ENCODE measurements at regions of chr22 and their contacts with region 1.

Region 1: DNA sequence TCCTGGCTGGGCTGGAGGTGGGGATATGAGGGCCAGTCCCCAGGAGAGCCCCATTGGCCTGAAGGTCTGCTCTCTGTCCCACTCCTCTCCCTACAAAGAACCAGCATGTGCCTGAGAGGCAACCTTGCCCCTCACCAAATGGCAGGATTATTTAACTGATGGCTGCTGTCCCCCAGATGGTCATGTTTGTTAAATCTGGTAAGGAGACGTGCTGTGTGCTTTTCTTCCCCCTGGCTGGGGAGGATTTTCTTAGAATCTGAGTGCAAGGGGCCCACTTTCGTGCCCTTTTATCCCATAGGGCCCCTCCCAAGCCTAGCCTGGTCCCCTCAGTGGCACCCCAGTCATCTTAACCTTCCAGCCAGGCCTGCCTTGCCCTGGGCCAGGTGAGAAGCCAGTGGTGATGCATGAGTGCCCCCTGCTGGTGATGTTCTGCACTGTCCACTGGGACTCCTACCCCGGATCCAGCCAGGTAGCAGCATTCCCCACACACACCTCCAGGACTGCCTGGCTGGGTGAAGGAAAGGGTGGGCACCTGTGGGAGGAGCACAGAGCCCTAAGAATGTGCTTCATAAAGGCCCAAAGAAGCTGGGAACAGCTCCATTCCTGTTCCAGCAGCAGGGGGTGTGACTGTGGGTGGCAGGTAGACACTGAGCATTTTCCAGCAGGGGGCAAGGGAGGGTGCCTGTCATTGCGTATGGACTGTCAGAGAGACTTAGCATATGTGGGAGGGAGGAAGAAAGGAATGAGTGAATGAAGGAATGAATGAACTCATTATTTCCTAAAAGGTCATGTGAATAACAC is 28.9 kb downstream of the MFNG start:
- H3K4me3 ChIP-seq: no peak overlapping the region
- H3K27ac ChIP-seq: no peak overlapping the region
- H3K4me1 ChIP-seq: 0 out of 2 replicates have a peak, but pooled peaks cover 4% of the 10 kb centered on the region
- CTCF ChIP-seq: peak; percentile 97

Region 2: GRCh38 chr22:37267135-37267587 is 190.1 kb before region 1 on chr22:
- CTCF ChIA-PET with region 1: interaction called, 13 read pairs
- POLR2A ChIA-PET with region 1: no interaction called
- H3K4me3 ChIP-seq: peak overlapping the region; percentile 12; the same call in 1 of the 2 replicates
- H3K27ac ChIP-seq: no peak overlapping the region
- H3K4me1 ChIP-seq: no peaks in the 10 kb centered on the region
- CTCF ChIP-seq: no peak

Region 3: DNA sequence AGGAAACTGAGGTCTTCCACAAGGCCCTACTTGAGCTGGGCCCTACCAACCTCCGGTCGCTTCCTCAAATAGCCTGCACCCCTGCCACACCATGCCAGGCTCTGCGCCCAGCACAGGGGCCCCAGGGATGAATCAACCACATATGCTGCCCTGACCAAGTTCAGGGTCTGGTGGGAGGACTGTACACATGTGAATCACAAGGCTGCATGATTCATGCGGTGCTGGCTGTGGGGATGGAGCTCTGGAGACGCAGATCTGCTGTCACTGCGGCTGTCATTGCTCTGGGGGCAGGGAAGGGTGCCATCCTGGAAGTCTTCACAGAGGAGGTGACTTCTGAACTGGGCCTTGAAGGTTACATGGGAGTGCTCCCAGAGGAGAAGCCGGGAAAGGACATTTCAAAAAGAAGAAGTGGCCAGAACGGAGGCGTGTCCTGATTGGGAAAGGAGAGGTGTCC is 153.4 kb before region 1 on chr22:
- CTCF ChIA-PET with region 1: interaction called, 10 read pairs
- POLR2A ChIA-PET with region 1: no interaction called
- H3K4me3 ChIP-seq: no peak overlapping the region
- H3K27ac ChIP-seq: no peak overlapping the region
- H3K4me1 ChIP-seq: 0 out of 2 replicates have a peak, but pooled peaks cover 4% of the 10 kb centered on the region
- CTCF ChIP-seq: no peak

Region 4: DNA sequence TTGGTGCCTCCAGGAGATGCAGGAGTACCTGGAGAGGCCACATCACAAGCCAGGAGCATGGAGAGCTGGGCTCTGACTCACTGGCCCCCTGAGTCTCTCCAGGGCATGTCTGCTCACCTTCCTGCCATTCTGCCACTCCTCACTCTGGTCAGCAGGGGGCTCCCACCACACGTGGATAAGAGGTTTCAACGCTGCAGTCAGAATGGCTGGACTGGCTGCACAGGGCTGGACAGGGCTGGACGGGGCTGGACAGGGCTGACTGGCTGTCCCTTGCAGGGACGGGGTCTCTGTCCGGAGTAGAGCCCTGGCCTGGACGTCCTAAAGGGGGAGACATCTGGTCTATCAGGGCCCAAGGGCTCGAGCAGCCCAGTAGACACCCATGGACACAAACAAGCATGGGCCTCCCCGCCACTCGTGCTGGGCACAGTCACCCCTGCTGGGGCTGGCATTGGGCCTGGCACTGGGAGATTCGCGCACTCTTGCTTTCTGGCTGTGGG is 140.4 kb before region 1 on chr22:
- CTCF ChIA-PET with region 1: interaction called, 273 read pairs
- POLR2A ChIA-PET with region 1: interaction called, 4 read pairs
- H3K4me3 ChIP-seq: no peak overlapping the region
- H3K27ac ChIP-seq: no peak overlapping the region
- H3K4me1 ChIP-seq: no peaks in the 10 kb centered on the region
- CTCF ChIP-seq: peak; percentile 95

Region 5: GRCh38 chr22:37330200-37331033 is 126.9 kb before region 1 on chr22:
- CTCF ChIA-PET with region 1: interaction called, 57 read pairs
- POLR2A ChIA-PET with region 1: no interaction called
- H3K4me3 ChIP-seq: no peak overlapping the region
- H3K27ac ChIP-seq: no peak overlapping the region
- H3K4me1 ChIP-seq: no peaks in the 10 kb centered on the region
- CTCF ChIP-seq: peak; percentile 37; the same call in 1 of the 2 replicates

Region 6: GRCh38 chr22:37428649-37429586 is 28.4 kb before region 1 on chr22:
- CTCF ChIA-PET with region 1: interaction called, 59 read pairs
- POLR2A ChIA-PET with region 1: interaction called, 16 read pairs
- H3K4me3 ChIP-seq: no peak overlapping the region
- H3K27ac ChIP-seq: no peak overlapping the region
- H3K4me1 ChIP-seq: no peaks in the 10 kb centered on the region
- CTCF ChIP-seq: peak; percentile 63

Measured in HEK293 (cell line).